ENCODE measurements at regions of chr12 and their contacts with region 1.

Region 1: DNA sequence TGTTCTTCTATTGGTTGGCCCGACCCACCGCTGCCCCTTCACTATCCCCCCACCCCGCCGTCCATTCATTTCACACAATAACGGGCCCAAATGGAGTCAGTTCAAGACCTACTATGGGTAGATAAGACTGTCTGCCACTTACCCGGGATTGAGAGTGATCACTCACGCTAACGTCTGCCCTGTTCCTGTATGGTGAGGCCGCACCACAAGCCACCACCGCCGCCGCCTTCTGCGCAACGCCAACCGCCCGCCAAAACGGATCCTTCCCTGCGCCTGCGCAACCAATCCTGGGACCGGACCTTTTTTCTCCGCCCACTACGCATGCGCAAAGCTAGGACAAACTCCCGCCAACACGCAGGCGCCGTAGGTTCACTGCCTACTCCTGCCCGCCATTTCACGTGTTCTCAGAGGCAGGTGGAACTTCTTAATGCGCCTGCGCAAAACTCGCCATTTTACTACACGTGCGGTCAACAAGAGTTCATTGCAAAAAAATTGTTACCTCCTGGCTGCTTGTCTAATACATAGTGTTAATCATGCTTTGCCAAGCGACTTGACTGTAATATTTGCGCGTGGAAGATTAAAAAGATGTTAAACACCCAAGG is at the start of gene CBX5:
- DNase-seq: peak; percentile 98 to 99
- H3K4me3 ChIP-seq: peak within 1 kb of the TSS; percentile 80
- H3K4me3 Mint-ChIP-seq: no peak within 1 kb of the TSS
- H3K27ac Mint-ChIP-seq: no peak within 1 kb of the TSS
- H3K4me1 ChIP-seq: peaks cover 32% of the 10 kb centered on the region
- H3K4me1 Mint-ChIP-seq: peaks cover 12% of the 10 kb centered on the region
- H3K27me3 ChIP-seq: no peaks in the 10 kb centered on the region
- H3K27me3 Mint-ChIP-seq: no peaks in the 10 kb centered on the region
- CTCF ChIP-seq: no peak
- total RNA-seq, gene CBX5: 85.2 and 85.5 TPM in 2 replicates

Region 2: GRCh38 chr12:53500776-53501614 is 779.0 kb before region 1 on chr12 and contains the start of gene TARBP2:
- CTCF ChIA-PET with region 1: no interaction called
- POLR2A ChIA-PET with region 1: no interaction called
- intact Hi-C with region 1: loop called (anchors 2 kb)
- DNase-seq: peak; percentile 97 to 98
- H3K4me3 ChIP-seq: peak within 1 kb of the TSS; percentile 63
- H3K4me3 Mint-ChIP-seq: peak within 1 kb of the TSS; percentile 80
- H3K27ac Mint-ChIP-seq: peak within 1 kb of the TSS; percentile 86
- H3K4me1 ChIP-seq: peaks cover 16% of the 10 kb centered on the region
- H3K4me1 Mint-ChIP-seq: peaks cover 31% of the 10 kb centered on the region
- H3K27me3 ChIP-seq: no peaks in the 10 kb centered on the region
- H3K27me3 Mint-ChIP-seq: no peaks in the 10 kb centered on the region
- CTCF ChIP-seq: no peak
- total RNA-seq, gene TARBP2: 43.9 and 50.7 TPM in 2 replicates

Region 3: DNA sequence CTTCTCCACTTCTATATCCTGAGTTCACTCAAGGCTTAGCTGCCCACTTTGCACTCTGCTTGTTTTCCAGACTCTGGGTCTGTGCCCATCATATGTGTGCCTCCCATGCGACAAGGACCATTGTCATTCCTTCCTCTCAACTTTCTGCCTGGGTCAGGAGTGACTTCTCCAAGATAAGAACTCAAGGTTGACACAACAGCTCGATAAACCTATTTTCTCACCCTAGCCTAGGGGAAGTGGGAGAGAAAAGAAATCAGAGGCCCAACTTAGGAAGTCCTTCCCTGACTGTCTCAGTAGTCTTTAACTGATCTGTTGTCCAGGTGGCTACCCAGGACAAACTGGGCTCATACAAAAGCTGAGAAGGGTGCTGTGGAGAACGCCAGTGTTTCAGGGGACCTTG is 92.9 kb before region 1 on chr12:
- CTCF ChIA-PET with region 1: no interaction called
- POLR2A ChIA-PET with region 1: no interaction called
- intact Hi-C with region 1: no loop called
- DNase-seq: peak in 1 of 2 experiments; percentile 29
- H3K4me3 ChIP-seq: no peak overlapping the region
- H3K4me3 Mint-ChIP-seq: peak overlapping the region; percentile 70
- H3K27ac Mint-ChIP-seq: no peak overlapping the region
- H3K4me1 ChIP-seq: peaks cover 27% of the 10 kb centered on the region
- H3K4me1 Mint-ChIP-seq: peaks cover under 1% of the 10 kb centered on the region
- H3K27me3 ChIP-seq: no peaks in the 10 kb centered on the region
- H3K27me3 Mint-ChIP-seq: no peaks in the 10 kb centered on the region
- CTCF ChIP-seq: no peak

Region 4: GRCh38 chr12:54259194-54260011 is 20.6 kb before region 1 on chr12:
- CTCF ChIA-PET with region 1: interaction called, 3 read pairs
- POLR2A ChIA-PET with region 1: interaction called, 29 read pairs
- intact Hi-C with region 1: loop called (anchors 1 kb)
- DNase-seq: peak; percentile 80 to 84
- H3K4me3 ChIP-seq: peak overlapping the region; percentile 35
- H3K4me3 Mint-ChIP-seq: peak overlapping the region; percentile 63
- H3K27ac Mint-ChIP-seq: peak overlapping the region; percentile 86
- H3K4me1 ChIP-seq: peaks cover 22% of the 10 kb centered on the region
- H3K4me1 Mint-ChIP-seq: peaks cover 15% of the 10 kb centered on the region
- H3K27me3 ChIP-seq: no peaks in the 10 kb centered on the region
- H3K27me3 Mint-ChIP-seq: no peaks in the 10 kb centered on the region
- CTCF ChIP-seq: no peak

Region 5: GRCh38 chr12:54300732-54301427 is 20.9 kb after region 1 on chr12 and contains the start of gene NFE2:
- CTCF ChIA-PET with region 1: interaction called, 12 read pairs
- POLR2A ChIA-PET with region 1: interaction called, 17 read pairs
- intact Hi-C with region 1: loop called (anchors 1 kb)
- DNase-seq: peak; percentile 91
- H3K4me3 ChIP-seq: peak within 1 kb of the TSS; percentile 59
- H3K4me3 Mint-ChIP-seq: peak within 1 kb of the TSS; percentile 79
- H3K27ac Mint-ChIP-seq: peak within 1 kb of the TSS; percentile 60
- H3K4me1 ChIP-seq: peaks cover 35% of the 10 kb centered on the region
- H3K4me1 Mint-ChIP-seq: peaks cover 42% of the 10 kb centered on the region
- H3K27me3 ChIP-seq: no peaks in the 10 kb centered on the region
- H3K27me3 Mint-ChIP-seq: no peaks in the 10 kb centered on the region
- CTCF ChIP-seq: no peak
- total RNA-seq, gene NFE2: 5.7 and 6.2 TPM in 2 replicates

Region 6: GRCh38 chr12:54359033-54359761 is 79.2 kb after region 1 on chr12:
- CTCF ChIA-PET with region 1: interaction called, 3 read pairs
- POLR2A ChIA-PET with region 1: interaction called, 29 read pairs
- intact Hi-C with region 1: loop called (anchors 2 kb)
- DNase-seq: peak; percentile 96 to 99
- H3K4me3 ChIP-seq: peak overlapping the region; percentile 70
- H3K4me3 Mint-ChIP-seq: no peak overlapping the region
- H3K27ac Mint-ChIP-seq: no peak overlapping the region
- H3K4me1 ChIP-seq: peaks cover 11% of the 10 kb centered on the region
- H3K4me1 Mint-ChIP-seq: peaks cover 7% of the 10 kb centered on the region
- H3K27me3 ChIP-seq: no peaks in the 10 kb centered on the region
- H3K27me3 Mint-ChIP-seq: no peaks in the 10 kb centered on the region
- CTCF ChIP-seq: no peak

Region 7: DNA sequence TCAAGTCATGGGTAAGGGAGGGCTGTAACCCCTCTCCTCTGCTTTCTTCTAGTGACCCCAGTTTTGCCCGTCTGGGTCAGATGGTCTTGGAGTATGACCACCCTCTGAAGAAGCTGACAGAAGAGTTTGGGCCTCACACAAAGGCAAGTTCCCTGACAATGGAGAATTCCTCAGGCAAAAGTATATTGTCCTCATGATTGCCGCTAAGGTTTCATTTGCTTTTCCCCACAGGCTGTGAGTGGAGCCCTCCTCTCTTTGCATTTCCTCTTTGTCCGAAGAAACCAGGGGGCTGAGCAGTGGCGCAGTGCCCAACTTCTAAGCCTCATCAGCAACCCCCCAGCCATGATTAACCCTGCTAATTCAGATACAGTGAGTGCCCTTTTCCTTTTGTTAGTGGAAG is 229.7 kb after region 1 on chr12:
- CTCF ChIA-PET with region 1: no interaction called
- POLR2A ChIA-PET with region 1: no interaction called
- intact Hi-C with region 1: no loop called
- DNase-seq: no peak
- H3K4me3 ChIP-seq: no peak overlapping the region
- H3K4me3 Mint-ChIP-seq: no peak overlapping the region
- H3K27ac Mint-ChIP-seq: no peak overlapping the region
- H3K4me1 ChIP-seq: no peaks in the 10 kb centered on the region
- H3K4me1 Mint-ChIP-seq: peaks cover 10% of the 10 kb centered on the region
- H3K27me3 ChIP-seq: no peaks in the 10 kb centered on the region
- H3K27me3 Mint-ChIP-seq: no peaks in the 10 kb centered on the region
- CTCF ChIP-seq: no peak

Measured in Caco-2 (cell line).